Calu3 (cell line): ENCODE measurements at regions of chr16 and their contacts with region 1.

Region 1: DNA sequence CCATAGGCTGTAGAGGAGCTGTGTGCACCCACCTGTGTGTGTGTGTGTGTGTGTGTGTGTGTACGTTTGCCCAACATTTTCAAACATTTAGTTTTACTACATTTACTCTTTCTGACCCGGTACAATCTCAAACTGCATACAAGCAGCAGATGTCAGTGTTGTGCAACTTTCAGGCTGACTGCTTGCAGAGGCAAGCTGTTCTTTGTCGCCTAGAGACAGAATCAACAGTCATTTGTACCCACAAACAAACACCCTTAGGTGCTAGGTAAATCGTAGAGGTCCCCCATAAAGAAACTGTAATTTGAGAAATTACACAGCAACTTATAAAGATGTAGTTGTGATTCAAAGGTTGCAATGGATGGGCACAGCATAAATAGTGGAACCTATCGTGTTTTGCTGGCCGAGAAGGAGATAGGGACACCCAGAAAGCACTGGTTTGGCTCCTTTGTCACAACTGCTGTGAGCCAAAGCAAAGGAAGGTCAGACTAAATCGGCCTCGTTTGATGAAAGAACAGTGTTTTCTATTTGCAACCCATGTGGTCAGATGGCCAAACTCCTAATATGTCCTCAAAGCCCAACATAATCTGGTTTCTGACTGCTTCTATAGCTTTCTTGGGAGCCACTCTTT is 478.4 kb downstream of the TOX3 start:
- DNase-seq: peak; percentile 64
- H3K4me3 Mint-ChIP-seq: no peak overlapping the region
- H3K27ac Mint-ChIP-seq: no peak overlapping the region
- H3K4me1 Mint-ChIP-seq: peaks cover 57% of the 10 kb centered on the region
- H3K27me3 Mint-ChIP-seq: no peaks in the 10 kb centered on the region
- CTCF ChIP-seq: no peak

Region 2: DNA sequence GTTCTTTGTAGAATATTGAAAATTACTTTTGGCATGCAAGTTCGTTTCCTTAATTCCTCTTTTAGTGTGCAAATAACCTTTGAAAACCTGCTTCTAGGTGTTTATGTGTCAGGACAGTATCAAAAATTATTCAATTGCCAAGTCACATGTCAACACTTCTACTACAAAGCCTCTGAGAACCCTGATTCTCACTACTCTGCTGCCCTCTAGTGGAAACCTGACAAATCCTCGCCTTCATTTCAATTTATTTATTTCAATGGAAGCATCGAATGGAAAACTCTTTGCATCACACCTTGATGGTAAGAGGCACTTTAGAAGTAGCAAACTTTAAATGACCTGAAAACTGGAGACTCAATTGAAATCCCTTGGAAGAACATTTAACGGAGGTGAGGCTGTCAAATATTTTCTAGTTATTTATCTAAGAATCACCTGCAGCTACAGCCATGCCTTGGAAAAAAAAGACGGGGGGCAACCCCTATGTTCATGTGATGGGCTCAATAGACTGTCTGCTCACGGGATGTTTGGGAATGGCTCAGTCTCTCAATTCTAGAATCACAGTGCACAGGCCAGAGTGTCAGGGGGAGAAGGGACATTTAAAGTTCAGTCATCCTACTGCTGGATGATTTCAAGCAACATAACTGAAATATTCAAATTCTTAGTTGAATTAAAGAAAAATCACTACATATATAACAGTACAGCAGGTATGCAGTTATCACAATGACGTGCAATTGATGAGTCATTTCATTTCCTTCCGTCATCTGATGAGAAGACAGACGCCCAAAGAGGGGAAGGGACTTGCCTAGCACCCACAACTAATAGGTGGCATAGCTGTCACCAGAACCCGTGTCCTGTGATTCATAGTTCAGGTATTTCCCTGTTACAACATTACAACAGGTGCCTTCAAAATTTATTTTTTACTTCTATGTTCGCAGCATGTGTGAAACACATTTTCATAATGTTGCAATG is 85.6 kb before region 1 on chr16:
- CTCF ChIA-PET with region 1: no interaction called
- intact Hi-C with region 1: no loop called
- DNase-seq: peak; percentile 72
- H3K4me3 Mint-ChIP-seq: peak overlapping the region; percentile 14
- H3K27ac Mint-ChIP-seq: peak overlapping the region; percentile 90
- H3K4me1 Mint-ChIP-seq: peaks cover 36% of the 10 kb centered on the region
- H3K27me3 Mint-ChIP-seq: no peaks in the 10 kb centered on the region
- CTCF ChIP-seq: peak; percentile 78

Region 3: GRCh38 chr16:52123061-52123843 is 54.7 kb after region 1 on chr16:
- CTCF ChIA-PET with region 1: no interaction called
- intact Hi-C with region 1: no loop called
- DNase-seq: no peak
- H3K4me3 Mint-ChIP-seq: no peak overlapping the region
- H3K27ac Mint-ChIP-seq: no peak overlapping the region
- H3K4me1 Mint-ChIP-seq: peaks cover 11% of the 10 kb centered on the region
- H3K27me3 Mint-ChIP-seq: no peaks in the 10 kb centered on the region
- CTCF ChIP-seq: no peak

Region 4: DNA sequence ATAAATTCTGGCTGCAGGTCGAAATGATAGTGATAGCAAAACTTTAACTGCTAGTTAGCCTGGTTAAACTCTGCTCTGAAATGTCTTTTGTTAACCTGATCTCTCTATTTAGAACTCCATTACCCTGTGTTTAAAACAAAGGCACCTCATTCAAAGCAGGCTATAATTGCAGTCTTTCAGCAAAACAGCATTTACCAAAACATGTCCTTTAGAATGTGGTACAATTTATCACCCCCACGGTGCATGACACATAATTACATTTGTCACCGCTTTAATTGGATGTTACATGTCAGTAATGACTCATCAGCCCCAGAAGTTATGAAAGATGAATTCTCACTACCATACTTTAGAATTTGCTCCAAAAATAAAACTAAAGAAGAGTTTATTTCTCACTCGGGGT is 182.9 kb after region 1 on chr16:
- CTCF ChIA-PET with region 1: interaction called, 3 read pairs
- intact Hi-C with region 1: loop called (anchors 2 kb)
- DNase-seq: no peak
- H3K4me3 Mint-ChIP-seq: no peak overlapping the region
- H3K27ac Mint-ChIP-seq: no peak overlapping the region
- H3K4me1 Mint-ChIP-seq: peaks cover 55% of the 10 kb centered on the region
- H3K27me3 Mint-ChIP-seq: no peaks in the 10 kb centered on the region
- CTCF ChIP-seq: no peak

Region 5: DNA sequence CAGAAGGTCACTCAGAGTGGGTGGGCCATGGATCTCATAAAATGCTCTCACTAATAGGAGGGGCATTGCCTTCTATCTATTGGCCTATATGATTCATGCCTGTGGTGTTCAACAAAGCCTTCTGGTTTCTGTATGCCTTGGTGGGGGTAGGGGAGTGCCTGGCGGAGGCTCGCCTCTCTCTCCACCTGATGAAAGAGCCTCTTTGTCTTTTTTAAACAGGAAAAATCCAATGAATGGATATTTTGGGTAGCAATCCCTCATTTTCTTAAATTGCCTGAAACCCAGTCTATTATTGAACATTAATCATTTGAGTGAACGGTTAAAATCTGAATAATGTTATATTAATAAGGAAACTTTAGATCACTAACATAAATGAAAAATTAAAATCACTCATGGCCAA is 387.8 kb after region 1 on chr16:
- CTCF ChIA-PET with region 1: no interaction called
- intact Hi-C with region 1: loop called (anchors 10 kb)
- DNase-seq: peak; percentile 87
- H3K4me3 Mint-ChIP-seq: peak overlapping the region; percentile 44
- H3K27ac Mint-ChIP-seq: peak overlapping the region; percentile 64
- H3K4me1 Mint-ChIP-seq: peaks cover 74% of the 10 kb centered on the region
- H3K27me3 Mint-ChIP-seq: no peaks in the 10 kb centered on the region
- CTCF ChIP-seq: no peak

Region 6: DNA sequence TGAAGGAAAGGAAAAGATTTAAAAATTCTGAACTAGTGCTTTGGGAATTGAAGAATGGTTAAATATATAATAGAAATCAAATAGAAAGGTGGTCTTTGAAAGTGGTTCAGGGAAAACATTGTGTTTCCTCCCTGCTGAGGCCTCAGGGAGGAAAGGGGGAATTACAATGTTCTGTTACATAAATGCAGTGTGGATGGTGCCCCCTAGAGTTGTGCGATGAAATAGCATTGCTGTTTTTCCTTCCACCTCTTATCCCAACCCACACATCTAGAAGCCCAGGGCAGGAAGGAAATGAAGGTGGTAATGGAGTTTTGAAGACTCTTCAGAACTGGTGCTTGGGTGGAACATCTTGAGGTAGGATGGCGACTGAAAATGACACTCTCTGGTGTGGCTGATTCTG is 484.8 kb after region 1 on chr16:
- CTCF ChIA-PET with region 1: interaction called, 3 read pairs
- intact Hi-C with region 1: loop called (anchors 10 kb)
- DNase-seq: no peak
- H3K4me3 Mint-ChIP-seq: no peak overlapping the region
- H3K27ac Mint-ChIP-seq: no peak overlapping the region
- H3K4me1 Mint-ChIP-seq: peaks cover 54% of the 10 kb centered on the region
- H3K27me3 Mint-ChIP-seq: no peaks in the 10 kb centered on the region
- CTCF ChIP-seq: peak; percentile 59

Region 7: DNA sequence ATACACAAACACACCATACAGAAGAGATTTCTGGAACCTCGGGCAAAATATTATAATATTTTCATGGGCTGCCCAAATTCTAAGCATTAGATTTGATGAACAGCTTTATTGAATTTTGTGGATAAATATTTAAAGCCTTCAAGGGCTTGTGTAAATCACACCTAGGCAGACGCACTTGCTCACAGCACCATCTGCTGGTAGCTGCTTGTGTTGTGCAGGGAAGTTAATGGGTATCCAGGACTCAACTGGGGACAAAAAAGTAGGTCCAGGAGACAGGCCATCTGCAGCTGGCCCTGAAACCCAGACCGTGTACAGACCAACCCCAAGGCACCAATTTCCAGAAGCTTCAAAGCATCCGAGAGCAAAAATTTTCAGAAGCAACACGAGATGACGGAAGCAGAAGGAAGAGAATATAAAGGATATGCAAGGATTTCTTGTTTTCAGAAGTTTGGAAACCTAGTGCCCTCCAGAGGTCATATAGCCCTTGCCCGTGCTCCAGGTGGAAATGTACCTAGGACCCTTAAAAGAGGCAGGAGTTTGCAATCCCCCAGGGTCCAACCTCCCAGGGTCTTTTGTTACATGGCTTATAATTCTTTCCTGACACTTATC is 844.1 kb after region 1 on chr16:
- CTCF ChIA-PET with region 1: interaction called, 30 read pairs
- intact Hi-C with region 1: loop called (anchors 1 kb)
- DNase-seq: peak; percentile 82
- H3K4me3 Mint-ChIP-seq: no peak overlapping the region
- H3K27ac Mint-ChIP-seq: no peak overlapping the region
- H3K4me1 Mint-ChIP-seq: peaks cover 7% of the 10 kb centered on the region
- H3K27me3 Mint-ChIP-seq: no peaks in the 10 kb centered on the region
- CTCF ChIP-seq: peak; percentile 89